Activated CD4-positive, alpha-beta T cell treated with anti-CD3 and anti-CD28 coated beads for 36 hours (primary cell): ENCODE measurements at regions of chr16 and their contacts with region 1.

Region 1: DNA sequence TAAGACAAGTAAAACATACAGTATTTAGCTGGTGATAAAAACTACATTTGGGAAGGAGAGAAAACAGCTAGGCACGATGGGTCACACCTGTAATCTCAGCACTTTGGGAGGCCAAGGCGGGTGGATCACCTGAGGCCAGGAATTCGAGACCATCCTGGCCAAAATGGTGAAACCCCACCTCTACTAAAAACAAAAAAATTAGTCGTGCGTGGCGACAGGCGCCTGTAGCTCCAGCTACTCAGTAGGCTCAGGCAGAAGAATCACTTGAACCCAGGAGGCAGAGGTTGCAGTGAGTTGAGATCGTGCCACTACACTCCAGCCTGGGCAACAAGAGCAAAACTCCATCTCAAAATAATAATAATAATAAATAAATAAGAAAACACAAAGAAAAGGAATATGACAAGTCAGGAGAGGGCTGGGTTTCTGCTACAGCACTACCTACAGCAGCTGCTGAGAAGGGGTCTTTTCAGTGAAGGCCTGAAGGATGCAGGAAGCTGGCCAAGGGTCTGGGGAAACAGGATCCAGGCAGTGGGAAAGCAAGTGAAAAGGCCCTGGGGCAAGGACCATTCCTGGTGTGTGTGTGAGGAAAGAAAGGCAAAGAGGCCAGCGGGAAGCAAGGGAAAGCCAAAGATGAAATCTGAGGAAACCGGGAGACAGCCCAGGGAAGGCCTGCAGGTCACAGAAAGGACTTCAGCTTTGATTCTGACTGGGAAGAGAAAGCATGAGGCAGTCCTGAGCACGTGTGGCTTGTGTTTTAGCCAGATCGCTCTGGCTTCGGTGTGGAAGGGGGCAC is 10.6 kb downstream of the MBTPS1 start:
- DNase-seq: no peak
- ATAC-seq: no peak
- H3K4me3 Mint-ChIP-seq: no peak overlapping the region
- H3K27ac Mint-ChIP-seq: peak overlapping the region; percentile 12
- H3K4me1 Mint-ChIP-seq: peaks cover 59% of the 10 kb centered on the region
- H3K27me3 Mint-ChIP-seq: no peaks in the 10 kb centered on the region

Region 2: GRCh38 chr16:83520596-83520995 is 585.5 kb before region 1 on chr16:
- CTCF ChIA-PET with region 1: no interaction called
- POLR2A ChIA-PET with region 1: no interaction called
- intact Hi-C with region 1: no loop called
- DNase-seq: no peak
- ATAC-seq: no peak
- H3K4me3 Mint-ChIP-seq: no peak overlapping the region
- H3K27ac Mint-ChIP-seq: no peak overlapping the region
- H3K4me1 Mint-ChIP-seq: no peaks in the 10 kb centered on the region
- H3K27me3 Mint-ChIP-seq: peaks cover 3% of the 10 kb centered on the region

Region 3: GRCh38 chr16:83926726-83927397 is 179.3 kb before region 1 on chr16:
- CTCF ChIA-PET with region 1: no interaction called
- POLR2A ChIA-PET with region 1: no interaction called
- intact Hi-C with region 1: no loop called
- DNase-seq: peak; percentile 81
- ATAC-seq: peak; percentile 93
- H3K4me3 Mint-ChIP-seq: no peak overlapping the region
- H3K27ac Mint-ChIP-seq: no peak overlapping the region
- H3K4me1 Mint-ChIP-seq: no peaks in the 10 kb centered on the region
- H3K27me3 Mint-ChIP-seq: no peaks in the 10 kb centered on the region

Region 4: GRCh38 chr16:84175350-84176081 is 69.4 kb after region 1 on chr16:
- CTCF ChIA-PET with region 1: interaction called, 10 read pairs
- POLR2A ChIA-PET with region 1: interaction called, 6 read pairs
- intact Hi-C with region 1: no loop called
- DNase-seq: peak; percentile 81
- ATAC-seq: peak; percentile 93
- H3K4me3 Mint-ChIP-seq: no peak overlapping the region
- H3K27ac Mint-ChIP-seq: no peak overlapping the region
- H3K4me1 Mint-ChIP-seq: peaks cover 19% of the 10 kb centered on the region
- H3K27me3 Mint-ChIP-seq: peaks cover 2% of the 10 kb centered on the region